ENCODE measurements at regions of chr1 and their contacts with region 1.

Region 1: DNA sequence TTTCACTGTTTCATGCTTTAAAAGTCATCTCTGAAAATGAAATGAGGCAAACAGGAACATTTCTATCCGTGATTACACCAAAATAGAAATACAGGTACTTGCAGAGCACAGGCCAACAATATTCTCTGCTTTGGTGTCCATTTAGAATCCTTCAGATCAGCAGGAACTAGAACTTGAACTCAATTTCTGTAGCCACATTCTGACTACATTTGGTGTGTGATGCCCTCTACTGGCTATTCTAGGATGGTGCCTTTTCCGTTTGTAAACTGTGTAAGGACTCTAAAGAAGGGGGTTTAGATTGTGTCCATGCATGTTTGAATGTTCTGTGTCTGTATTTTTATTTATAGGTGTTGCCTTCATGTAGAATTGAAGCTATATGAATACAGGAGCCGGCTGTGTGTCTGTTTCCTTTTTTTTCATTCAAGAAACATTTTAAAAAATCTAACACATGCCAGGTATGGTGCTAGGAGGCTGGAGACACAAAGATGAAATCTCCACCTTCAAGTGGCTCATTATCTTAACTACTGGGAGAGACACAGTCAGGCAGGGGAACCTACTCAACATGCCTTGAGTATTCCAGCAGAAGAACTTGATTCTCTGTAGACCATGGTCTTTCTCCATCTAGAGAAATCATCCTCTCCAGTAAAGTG is 7.6 kb upstream of the ZNF326 start:
- DNase-seq: peak; percentile 88
- ATAC-seq: peak; percentile 79
- H3K4me3 ChIP-seq: no peak overlapping the region
- H3K27ac ChIP-seq: no peak overlapping the region
- H3K4me1 ChIP-seq: peaks cover 27% of the 10 kb centered on the region
- H3K27me3 ChIP-seq: no peaks in the 10 kb centered on the region
- CTCF ChIP-seq: peak; percentile 95

Region 2: GRCh38 chr1:89780721-89781120 is 206.6 kb before region 1 on chr1:
- CTCF ChIA-PET with region 1: no interaction called
- POLR2A ChIA-PET with region 1: no interaction called
- intact Hi-C with region 1: loop called (anchors 1 kb)
- DNase-seq: peak; percentile 76
- ATAC-seq: peak; percentile 94
- H3K4me3 ChIP-seq: no peak overlapping the region
- H3K27ac ChIP-seq: no peak overlapping the region
- H3K4me1 ChIP-seq: no peaks in the 10 kb centered on the region
- H3K27me3 ChIP-seq: no peaks in the 10 kb centered on the region
- CTCF ChIP-seq: peak; percentile 81

Region 3: DNA sequence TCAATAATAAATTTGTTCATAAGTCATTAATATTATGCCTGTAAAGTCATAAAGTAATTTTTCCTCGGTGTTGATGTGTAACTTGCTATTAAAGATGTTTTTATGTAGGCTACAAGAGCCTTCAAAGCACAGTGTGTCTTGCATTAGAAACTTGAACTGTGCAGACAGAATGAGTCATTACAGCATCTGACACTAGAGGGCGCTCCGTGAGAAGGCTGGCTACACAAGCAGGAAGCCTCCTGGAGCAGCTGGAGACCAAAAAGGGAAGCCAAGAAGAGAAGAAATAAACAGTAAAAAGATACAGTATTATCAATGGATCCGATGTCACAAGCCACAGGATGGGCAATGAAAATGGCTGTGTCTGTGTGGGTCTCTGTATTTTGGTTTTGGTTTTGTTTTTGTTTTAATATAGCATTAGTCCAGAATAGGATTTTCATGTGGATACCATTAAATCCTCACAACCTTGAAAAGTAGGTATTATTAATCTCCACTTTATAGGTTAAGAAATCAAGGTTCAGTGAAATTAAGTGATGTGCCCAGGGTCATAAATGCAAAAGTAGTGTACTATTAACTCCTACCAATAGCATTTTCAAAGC is 182.6 kb before region 1 on chr1:
- CTCF ChIA-PET with region 1: interaction called, 3 read pairs
- POLR2A ChIA-PET with region 1: no interaction called
- intact Hi-C with region 1: loop called (anchors 1 kb)
- DNase-seq: peak; percentile 93
- ATAC-seq: peak; percentile 86
- H3K4me3 ChIP-seq: no peak overlapping the region
- H3K27ac ChIP-seq: no peak overlapping the region
- H3K4me1 ChIP-seq: peaks cover 23% of the 10 kb centered on the region
- H3K27me3 ChIP-seq: no peaks in the 10 kb centered on the region
- CTCF ChIP-seq: peak; percentile 96

Region 4: DNA sequence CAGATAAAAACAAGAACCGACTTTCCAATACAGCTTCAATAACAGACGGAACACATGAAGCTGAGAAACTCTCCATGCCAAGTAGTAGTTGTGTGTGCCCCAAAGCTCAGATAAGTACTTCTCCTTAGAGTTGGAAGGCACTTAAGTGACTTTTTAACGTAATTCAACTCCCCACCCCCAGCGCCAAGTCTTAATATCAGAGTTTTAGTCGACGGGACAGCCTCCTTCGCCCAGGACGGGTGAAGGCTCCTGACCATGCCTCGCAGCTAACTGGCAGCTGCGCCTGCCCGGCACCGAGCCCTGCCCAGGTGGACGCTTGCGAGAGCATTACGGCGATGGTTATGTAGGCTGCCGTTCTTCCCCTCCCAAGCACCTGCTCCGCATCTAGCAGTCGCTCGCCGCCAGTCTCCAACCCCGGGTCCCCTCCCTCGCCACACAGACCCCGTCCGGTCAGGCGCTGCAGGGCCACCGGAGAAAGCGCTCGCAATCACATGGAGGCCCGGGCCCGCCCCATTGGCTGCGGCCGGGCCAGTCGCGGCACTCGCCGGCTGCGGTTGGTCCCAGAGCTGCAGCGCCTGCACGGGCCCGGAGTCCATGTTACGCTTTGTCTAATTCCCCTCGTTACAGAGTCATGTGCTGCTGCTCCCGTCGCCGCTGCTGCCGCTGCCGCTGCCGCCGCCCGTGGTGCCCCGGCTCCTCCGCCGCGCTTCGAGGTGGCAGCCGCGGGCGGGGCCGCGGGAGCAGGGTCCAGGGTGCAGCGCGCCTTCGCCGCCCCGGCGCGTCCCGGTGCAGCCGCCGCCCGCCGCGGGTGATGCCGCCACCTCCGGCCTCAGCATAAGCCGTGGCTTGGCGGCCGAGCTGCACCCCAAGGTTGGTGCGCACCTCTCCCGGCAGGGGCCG is 166.6 kb before region 1 on chr1 and contains the start of gene LRRC8D:
- CTCF ChIA-PET with region 1: no interaction called
- POLR2A ChIA-PET with region 1: no interaction called
- intact Hi-C with region 1: loop called (anchors 1 kb)
- DNase-seq: peak; percentile 82
- ATAC-seq: peak; percentile 94
- H3K4me3 ChIP-seq: peak within 1 kb of the TSS; percentile 95
- H3K27ac ChIP-seq: no peak within 1 kb of the TSS
- H3K4me1 ChIP-seq: peaks cover 16% of the 10 kb centered on the region; the same call in 1 of the 2 replicates
- H3K27me3 ChIP-seq: no peaks in the 10 kb centered on the region
- CTCF ChIP-seq: no peak
- total RNA-seq, gene LRRC8D: 19.6 and 21.8 TPM in 2 replicates

Region 5: DNA sequence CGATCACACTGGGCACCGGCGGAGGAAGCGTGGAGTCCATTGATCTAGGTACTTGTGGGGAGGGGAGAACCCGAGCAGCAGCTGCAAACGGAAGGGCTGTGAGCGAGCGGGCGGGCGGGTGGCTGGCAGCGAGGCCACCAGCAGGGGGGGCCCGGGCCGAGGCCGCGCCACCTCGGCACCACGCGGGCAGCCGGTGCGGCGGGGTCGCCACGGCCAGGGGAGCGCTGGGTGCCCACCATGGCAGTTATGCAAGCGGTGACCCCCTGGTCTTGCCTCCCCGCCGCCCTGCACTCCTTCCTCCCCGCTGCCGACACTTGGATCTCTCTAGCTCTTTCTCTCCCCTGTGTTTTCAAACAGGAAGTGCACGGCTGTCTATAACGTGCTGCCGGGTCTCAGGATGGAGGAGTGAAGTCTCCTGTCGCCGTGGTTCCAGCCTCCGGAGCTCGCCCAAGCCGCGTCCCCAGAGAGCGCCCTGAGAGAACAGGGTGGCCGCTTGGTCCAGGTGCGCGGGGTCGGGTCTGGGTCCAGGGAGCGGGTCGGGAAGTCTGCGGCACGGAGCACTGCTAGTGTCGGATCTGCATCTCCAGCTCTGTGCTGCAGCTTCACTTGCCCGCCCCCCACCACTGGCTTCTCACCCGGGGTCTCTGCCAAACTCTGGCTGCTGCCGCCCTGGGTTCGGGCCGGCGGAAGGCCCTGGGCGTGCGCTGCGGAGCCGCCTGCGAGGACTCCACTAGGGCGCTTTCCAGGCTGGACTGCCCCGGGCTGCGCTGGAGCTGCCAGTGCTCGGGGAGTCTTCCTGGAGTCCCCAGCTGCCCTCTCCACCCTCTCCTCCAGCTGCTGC is 143.8 kb before region 1 on chr1:
- CTCF ChIA-PET with region 1: interaction called, 3 read pairs
- POLR2A ChIA-PET with region 1: no interaction called
- intact Hi-C with region 1: loop called (anchors 1 kb)
- DNase-seq: peak; percentile 67
- ATAC-seq: peak; percentile 91
- H3K4me3 ChIP-seq: peak overlapping the region; percentile 90
- H3K27ac ChIP-seq: peak overlapping the region; percentile 58
- H3K4me1 ChIP-seq: peaks cover 16% of the 10 kb centered on the region
- H3K27me3 ChIP-seq: no peaks in the 10 kb centered on the region
- CTCF ChIP-seq: peak; percentile 69

Region 6: GRCh38 chr1:89884718-89885596 is 102.3 kb before region 1 on chr1:
- CTCF ChIA-PET with region 1: no interaction called
- POLR2A ChIA-PET with region 1: no interaction called
- intact Hi-C with region 1: loop called (anchors 5 kb)
- DNase-seq: peak; percentile 64
- ATAC-seq: peak; percentile 38
- H3K4me3 ChIP-seq: no peak overlapping the region
- H3K27ac ChIP-seq: peak overlapping the region; percentile 12
- H3K4me1 ChIP-seq: peaks cover 38% of the 10 kb centered on the region
- H3K27me3 ChIP-seq: no peaks in the 10 kb centered on the region
- CTCF ChIP-seq: no peak

Region 7: GRCh38 chr1:89945852-89946476 is 41.3 kb before region 1 on chr1:
- CTCF ChIA-PET with region 1: no interaction called
- POLR2A ChIA-PET with region 1: no interaction called
- intact Hi-C with region 1: loop called (anchors 2 kb)
- DNase-seq: peak; percentile 73
- ATAC-seq: peak; percentile 70
- H3K4me3 ChIP-seq: no peak overlapping the region
- H3K27ac ChIP-seq: 0 out of 2 replicates have a peak overlapping the region, but pooled peaks have one; percentile 6
- H3K4me1 ChIP-seq: peaks cover 28% of the 10 kb centered on the region
- H3K27me3 ChIP-seq: no peaks in the 10 kb centered on the region
- CTCF ChIP-seq: no peak

Region 8: DNA sequence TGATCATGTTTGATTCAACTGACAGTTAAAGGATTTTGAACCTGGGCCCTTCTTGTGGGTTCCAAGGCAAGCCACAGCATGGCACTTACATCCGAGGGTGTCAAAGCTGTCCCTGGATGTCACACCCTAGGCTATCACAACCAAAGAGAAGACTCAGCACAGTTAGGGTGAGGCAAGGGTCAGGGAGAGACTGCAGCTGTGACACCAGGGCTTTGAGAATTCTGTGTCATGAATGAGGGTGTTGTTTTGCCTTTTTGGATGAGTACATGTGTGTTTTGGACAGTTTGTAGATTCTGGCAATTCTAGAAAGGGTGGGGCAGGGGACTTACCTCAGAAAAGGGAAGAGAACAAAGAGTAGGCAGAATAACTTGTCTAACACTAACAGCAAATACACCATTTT is 30.2 kb before region 1 on chr1:
- CTCF ChIA-PET with region 1: no interaction called
- POLR2A ChIA-PET with region 1: no interaction called
- intact Hi-C with region 1: no loop called
- DNase-seq: peak; percentile 42
- ATAC-seq: peak; percentile 21; the same call in 1 of the 2 replicates
- H3K4me3 ChIP-seq: no peak overlapping the region
- H3K27ac ChIP-seq: peak overlapping the region; percentile 27; the same call in 1 of the 2 replicates
- H3K4me1 ChIP-seq: peaks cover 35% of the 10 kb centered on the region
- H3K27me3 ChIP-seq: no peaks in the 10 kb centered on the region
- CTCF ChIP-seq: no peak